ENCODE measurements at regions of chr17 and their contacts with region 1.

Region 1: DNA sequence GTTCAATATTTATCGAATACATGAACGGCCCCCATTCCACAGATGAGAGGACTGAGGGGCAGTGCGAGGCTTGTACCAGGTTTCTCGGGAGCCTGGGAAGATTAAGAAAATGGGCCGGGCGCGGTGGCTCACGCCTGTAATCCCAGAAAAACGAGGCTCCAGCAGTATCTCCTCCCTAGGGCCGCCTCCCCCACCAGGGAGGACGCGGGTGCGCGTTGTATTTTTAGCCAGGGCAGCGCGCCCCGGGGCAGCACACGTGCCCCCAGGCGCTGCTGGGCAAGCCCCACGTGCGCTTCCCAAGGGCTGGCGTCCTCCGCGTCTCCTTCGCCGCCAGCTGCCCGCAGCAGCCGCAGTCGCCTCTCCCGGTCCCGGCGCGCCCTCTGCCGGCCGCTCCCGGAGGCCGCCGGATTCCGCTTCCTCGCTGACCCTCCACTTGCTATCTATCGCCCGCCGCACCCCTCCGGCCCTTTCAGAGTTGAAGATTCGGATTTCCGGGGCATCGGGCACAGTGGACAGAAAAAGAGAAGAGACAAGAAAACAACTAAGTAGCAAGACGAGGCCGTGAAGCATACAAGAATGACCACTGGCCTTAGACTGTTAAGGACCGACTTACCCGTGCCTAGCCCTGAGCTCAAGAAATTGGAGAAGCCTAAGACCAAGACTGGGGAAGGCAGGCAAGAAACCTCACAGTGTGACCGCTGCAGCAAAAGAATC is 1.9 kb upstream of the YBX2 start:
- DNase-seq: peak; percentile 90 to 95
- ATAC-seq: peak; percentile 82 to 92 (median 83)
- H3K4me3 ChIP-seq: peak overlapping the region; percentile 43
- H3K27ac ChIP-seq: peak overlapping the region; percentile 91
- H3K4me1 ChIP-seq: peaks cover 27% of the 10 kb centered on the region
- H3K27me3 ChIP-seq: peaks cover 0 to 9% (median 0%) of the 10 kb centered on the region in 3 donors
- CTCF ChIP-seq: peak; percentile 98

Region 2: DNA sequence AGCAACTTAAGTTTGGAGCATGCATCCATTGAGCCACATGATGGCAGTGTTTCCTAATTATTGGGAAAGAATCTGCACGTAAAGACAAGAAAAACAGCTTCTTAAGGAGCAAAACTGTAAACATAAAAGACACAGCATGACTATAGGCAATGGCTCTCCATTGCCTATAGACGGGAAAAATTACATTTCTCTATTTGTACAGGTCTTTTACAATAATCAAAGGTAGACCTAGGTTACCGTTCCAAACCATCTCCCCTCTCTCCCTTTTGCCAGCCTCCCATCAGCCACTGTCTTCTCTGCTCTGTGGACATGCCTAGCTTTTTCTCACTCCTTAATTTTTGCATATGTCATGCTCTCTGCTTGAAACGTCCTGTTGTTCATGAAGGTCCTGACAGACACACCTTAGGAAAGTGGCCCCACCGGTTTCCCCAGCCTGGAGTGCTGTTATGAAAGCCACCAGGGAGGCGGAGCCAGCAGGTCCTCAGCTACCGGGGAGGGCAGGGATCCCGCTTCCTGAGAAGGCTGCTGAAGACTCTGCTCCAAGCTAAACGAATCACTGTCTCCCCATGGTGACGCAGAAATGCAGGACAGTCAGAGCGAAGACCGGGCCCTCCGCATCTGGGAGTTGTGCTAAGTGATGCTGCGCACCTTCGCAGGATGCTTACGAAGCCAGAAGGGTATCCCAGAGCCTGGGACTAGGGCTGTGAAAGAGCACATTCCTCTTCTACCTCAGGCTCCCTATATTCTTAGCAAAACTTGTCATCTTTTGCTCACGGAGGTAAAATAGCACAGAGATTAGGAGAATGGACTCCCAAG is 250.2 kb before region 1 on chr17:
- intact Hi-C with region 1: loop called in 1 of 2 experiments (anchors 5 kb)
- DNase-seq: no peak
- ATAC-seq: peak in 3 of 4 donors; percentile 22 to 72 (median 46)
- H3K4me3 ChIP-seq: peak overlapping the region; percentile 57
- H3K27ac ChIP-seq: no peak overlapping the region
- H3K4me1 ChIP-seq: peaks cover 21% of the 10 kb centered on the region
- H3K27me3 ChIP-seq: peaks cover 0 to 29% (median 10%) of the 10 kb centered on the region in 3 donors
- CTCF ChIP-seq: peak; percentile 81

Region 3: DNA sequence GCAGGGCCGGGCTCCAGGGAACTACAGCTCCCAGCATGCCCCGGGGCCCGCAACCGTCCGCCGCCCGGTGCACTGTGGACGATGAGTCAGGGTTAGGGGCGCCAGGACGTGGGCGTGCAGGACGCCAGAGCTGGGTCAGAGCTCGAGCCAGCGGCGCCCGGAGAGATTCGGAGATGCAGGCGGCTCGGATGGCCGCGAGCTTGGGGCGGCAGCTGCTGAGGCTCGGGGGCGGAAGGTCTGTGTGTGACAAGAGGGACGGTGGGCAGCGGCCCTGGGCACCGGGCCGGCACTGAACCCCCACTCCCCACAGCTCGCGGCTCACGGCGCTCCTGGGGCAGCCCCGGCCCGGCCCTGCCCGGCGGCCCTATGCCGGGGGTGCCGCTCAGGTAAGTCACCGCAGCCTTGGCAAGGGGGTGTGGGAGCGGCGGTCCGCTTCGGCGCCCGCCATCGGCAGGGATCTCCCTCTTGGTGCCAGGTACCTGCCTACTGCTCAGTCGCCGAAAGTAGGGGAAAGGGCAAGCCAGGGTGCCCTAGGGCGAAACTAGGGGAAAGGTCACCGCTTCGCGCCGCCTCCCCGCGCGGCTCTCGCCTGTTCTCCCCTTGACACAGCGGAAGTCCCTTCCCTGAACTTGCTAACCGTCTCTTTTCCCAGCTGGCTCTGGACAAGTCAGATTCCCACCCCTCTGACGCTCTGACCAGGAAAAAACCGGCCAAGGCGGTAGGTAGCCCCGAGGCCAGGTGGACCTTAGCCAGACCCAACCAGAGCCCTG is 76.3 kb before region 1 on chr17 and contains the starts of genes ACADVL and DLG4:
- intact Hi-C with region 1: loop called in 1 of 2 experiments (anchors 2 kb)
- DNase-seq: peak; percentile 97
- ATAC-seq: peak; percentile 86 to 88 (median 86)
- H3K4me3 ChIP-seq: peak within 1 kb of the TSS; percentile 98
- H3K27ac ChIP-seq: peak within 1 kb of the TSS; percentile 99
- H3K4me1 ChIP-seq: peaks cover 34% of the 10 kb centered on the region
- H3K27me3 ChIP-seq: no peaks in the 10 kb centered on the region
- CTCF ChIP-seq: no peak
- total RNA-seq, gene ACADVL: 987 to 1,310 (median 1,099) TPM
- total RNA-seq, gene DLG4: 3.2 to 8.9 (median 5.8) TPM

Region 4: GRCh38 chr17:7252176-7253043 is 43.9 kb before region 1 on chr17 and contains the start of gene ELP5:
- intact Hi-C with region 1: loop called in 1 of 2 experiments (anchors 1 kb)
- DNase-seq: peak; percentile 96 to 98
- ATAC-seq: peak; percentile 68 to 80 (median 72)
- H3K4me3 ChIP-seq: peak within 1 kb of the TSS; percentile 99
- H3K27ac ChIP-seq: peak within 1 kb of the TSS; percentile 99
- H3K4me1 ChIP-seq: peaks cover 42% of the 10 kb centered on the region
- H3K27me3 ChIP-seq: no peaks in the 10 kb centered on the region
- CTCF ChIP-seq: peak; percentile 21
- total RNA-seq, gene ELP5: 55.7 to 87.0 (median 74.8) TPM

Region 5: GRCh38 chr17:7280519-7281429 is 15.6 kb before region 1 on chr17:
- intact Hi-C with region 1: loop called (anchors 1 to 2 kb)
- DNase-seq: peak; percentile 85 to 93
- ATAC-seq: peak; percentile 67 to 78 (median 70)
- H3K4me3 ChIP-seq: peak overlapping the region; percentile 86
- H3K27ac ChIP-seq: peak overlapping the region; percentile 96
- H3K4me1 ChIP-seq: peaks cover 29% of the 10 kb centered on the region
- H3K27me3 ChIP-seq: no peaks in the 10 kb centered on the region
- CTCF ChIP-seq: peak; percentile 89

Measured in psoas muscle (tissue), 8 donors.